PC-3 (cell line): ENCODE measurements at regions of chr1 and their contacts with region 1.

Region 1: GRCh38 chr1:180533266-180533987 is 25.3 kb upstream of the OVAAL start:
- DNase-seq: peak; percentile 67
- ATAC-seq: peak; percentile 56
- H3K4me3 ChIP-seq: no peak overlapping the region
- H3K27ac ChIP-seq: no peak overlapping the region
- H3K4me1 ChIP-seq: peaks cover 7% of the 10 kb centered on the region; the same call in 1 of the 2 replicates
- H3K27me3 ChIP-seq: no peaks in the 10 kb centered on the region
- CTCF ChIP-seq: peak; percentile 83

Region 2: DNA sequence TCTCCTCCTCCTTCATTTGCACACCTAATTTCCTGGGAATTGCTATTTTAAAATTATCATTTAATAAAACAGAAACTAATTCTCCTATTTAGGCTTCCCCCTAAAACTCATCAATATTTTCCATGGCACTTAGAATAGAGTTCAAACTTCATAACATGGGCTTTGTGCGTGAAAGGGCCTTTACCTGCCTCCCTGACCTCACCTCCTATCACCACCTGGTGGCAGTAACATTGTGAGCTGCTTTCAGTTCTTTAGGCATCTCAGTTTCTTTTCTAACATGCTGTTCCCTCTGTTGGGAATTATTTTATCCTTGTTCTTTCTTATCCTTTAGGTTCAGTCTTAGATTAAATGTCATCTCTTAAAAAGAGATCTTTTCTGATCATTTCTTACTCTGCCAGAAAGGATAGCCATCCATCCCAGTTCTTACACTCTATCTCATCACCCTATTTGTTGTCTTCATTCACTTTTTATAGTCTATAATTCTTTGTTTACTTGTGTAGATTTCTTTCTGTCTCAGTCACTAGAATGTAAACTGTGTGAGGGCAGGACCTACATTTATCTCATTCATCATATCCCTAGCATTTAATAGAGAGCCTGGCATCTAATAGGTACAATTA is 245.5 kb after region 1 on chr1:
- CTCF ChIA-PET with region 1: no interaction called
- POLR2A ChIA-PET with region 1: no interaction called
- intact Hi-C with region 1: loop called (anchors 5 kb)
- DNase-seq: peak; percentile 38
- ATAC-seq: peak; percentile 53
- H3K4me3 ChIP-seq: no peak overlapping the region
- H3K27ac ChIP-seq: no peak overlapping the region
- H3K4me1 ChIP-seq: no peaks in the 10 kb centered on the region
- H3K27me3 ChIP-seq: no peaks in the 10 kb centered on the region
- CTCF ChIP-seq: peak; percentile 71